PC-3 (cell line): ENCODE measurements at regions of chr20 and their contacts with region 1.

Region 1: GRCh38 chr20:8764344-8764962 is 304.4 kb upstream of the PLCB4 start:
- DNase-seq: peak; percentile 44
- ATAC-seq: peak; percentile 93
- H3K4me3 ChIP-seq: no peak overlapping the region
- H3K27ac ChIP-seq: no peak overlapping the region
- H3K4me1 ChIP-seq: 0 out of 2 replicates have a peak, but pooled peaks cover 3% of the 10 kb centered on the region
- H3K27me3 ChIP-seq: no peaks in the 10 kb centered on the region
- CTCF ChIP-seq: no peak

Region 2: GRCh38 chr20:8938532-8938931 is 174.1 kb after region 1 on chr20:
- CTCF ChIA-PET with region 1: no interaction called
- POLR2A ChIA-PET with region 1: no interaction called
- intact Hi-C with region 1: loop called (anchors 2 kb)
- DNase-seq: peak; percentile 65
- ATAC-seq: peak; percentile 94
- H3K4me3 ChIP-seq: no peak overlapping the region
- H3K27ac ChIP-seq: peak overlapping the region; percentile 63
- H3K4me1 ChIP-seq: peaks cover 18% of the 10 kb centered on the region
- H3K27me3 ChIP-seq: no peaks in the 10 kb centered on the region
- CTCF ChIP-seq: no peak